Right ventricle myocardium inferior (tissue), 1 donor: ENCODE measurements at regions of chr3 and their contacts with region 1.

Region 1: GRCh38 chr3:186783073-186783730 is at the start of gene EIF4A2:
- DNase-seq: peak; percentile 94
- ATAC-seq: peak; percentile 87
- total RNA-seq, gene EIF4A2: 422 TPM

Region 2: DNA sequence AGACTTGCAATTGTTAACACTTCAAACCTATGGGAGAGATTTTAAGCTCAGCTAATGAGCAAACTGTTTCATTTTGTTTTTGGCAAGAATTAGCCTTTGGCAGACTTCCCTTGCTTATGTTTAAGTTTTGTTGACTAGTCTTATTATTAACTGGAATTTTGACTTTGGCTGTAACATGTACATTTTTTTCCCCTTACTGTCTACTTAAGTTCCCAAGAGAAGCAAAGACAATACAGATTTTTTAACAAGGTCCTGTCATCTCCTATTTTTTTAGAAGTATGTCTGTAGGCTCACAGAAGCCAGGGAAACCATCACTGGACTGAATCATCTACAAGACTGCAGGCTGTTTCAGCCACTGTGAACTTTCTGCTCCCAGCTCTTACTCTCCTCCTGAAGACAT is 495.5 kb before region 1 on chr3:
- intact Hi-C with region 1: no loop called
- DNase-seq: no peak
- ATAC-seq: no peak

Region 3: GRCh38 chr3:186464424-186465093 is 318.6 kb before region 1 on chr3:
- intact Hi-C with region 1: no loop called
- DNase-seq: no peak
- ATAC-seq: no peak

Region 4: GRCh38 chr3:186806089-186807055 is 23.2 kb after region 1 on chr3 and contains the start of gene RFC4:
- intact Hi-C with region 1: loop called (anchors 1 kb)
- DNase-seq: peak; percentile 95
- ATAC-seq: peak; percentile 96
- total RNA-seq, gene RFC4: 11.1 TPM